ENCODE measurements at regions of chr1 and their contacts with region 1.

Region 1: GRCh38 chr1:32072622-32073298 is at the start of gene TMEM39B:
- DNase-seq: peak; percentile 89 to 98 (median 92)
- ATAC-seq: peak; percentile 84 to 86
- H3K4me3 Mint-ChIP-seq: peak within 1 kb of the TSS; percentile 87 to 99 (median 95)
- H3K27ac Mint-ChIP-seq: peak within 1 kb of the TSS; percentile 74 to 98 (median 94)
- H3K4me1 Mint-ChIP-seq: peaks cover 29 to 45% (median 34%) of the 10 kb centered on the region in 4 donors
- H3K27me3 Mint-ChIP-seq: no peaks in the 10 kb centered on the region
- polyA plus RNA-seq, gene TMEM39B: 2.4 to 4.8 (median 4.5) TPM

Region 2: DNA sequence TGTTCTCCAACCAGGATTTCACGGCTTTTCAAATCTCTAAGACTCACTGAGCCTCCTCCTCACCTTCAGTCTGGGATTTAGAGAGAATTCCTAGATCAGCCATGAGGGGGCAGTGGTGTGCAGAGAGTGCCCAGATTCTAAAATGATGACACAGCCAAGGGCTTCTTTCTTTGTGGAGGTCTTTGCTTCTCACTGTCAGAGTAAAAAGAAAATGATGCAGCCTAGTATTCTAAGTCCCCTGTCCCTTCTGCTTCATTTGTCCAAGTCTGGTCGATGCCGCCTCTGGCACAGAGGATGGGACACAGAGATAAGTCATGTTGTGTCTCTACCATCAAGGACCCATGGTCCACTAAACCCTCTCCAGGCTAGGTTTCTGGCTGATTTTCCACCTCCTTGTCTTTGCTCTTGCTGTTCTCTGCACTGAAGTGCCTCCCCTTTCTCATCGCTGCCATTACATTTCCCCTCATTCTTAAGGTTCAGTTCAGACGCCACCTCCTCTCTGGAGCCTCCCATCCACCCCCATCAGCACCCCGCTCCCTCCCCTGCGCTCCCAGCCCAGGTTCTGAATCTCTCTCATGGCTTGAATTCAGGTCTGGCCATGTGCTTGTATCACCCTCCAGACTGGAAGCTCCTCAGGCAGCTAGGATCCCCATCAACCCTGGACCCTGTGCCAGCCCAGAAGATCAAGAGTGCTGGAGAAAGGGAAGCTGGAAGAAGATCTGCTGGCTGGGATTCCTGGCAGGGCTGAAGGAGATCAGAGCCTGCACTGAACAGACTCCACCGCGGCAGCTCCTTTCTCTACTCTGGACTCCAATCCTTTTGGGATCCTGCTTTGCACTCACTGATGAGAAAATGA is 508.4 kb before region 1 on chr1:
- POLR2A ChIA-PET with region 1: no interaction called
- DNase-seq: peak in 7 of 10 donors; percentile 25 to 58 (median 48)
- ATAC-seq: peak; percentile 36 to 52
- H3K4me3 Mint-ChIP-seq: no peak overlapping the region
- H3K27ac Mint-ChIP-seq: no peak overlapping the region
- H3K4me1 Mint-ChIP-seq: no peaks in the 10 kb centered on the region
- H3K27me3 Mint-ChIP-seq: peaks cover 11 to 44% (median 14%) of the 10 kb centered on the region in 5 donors

Region 3: DNA sequence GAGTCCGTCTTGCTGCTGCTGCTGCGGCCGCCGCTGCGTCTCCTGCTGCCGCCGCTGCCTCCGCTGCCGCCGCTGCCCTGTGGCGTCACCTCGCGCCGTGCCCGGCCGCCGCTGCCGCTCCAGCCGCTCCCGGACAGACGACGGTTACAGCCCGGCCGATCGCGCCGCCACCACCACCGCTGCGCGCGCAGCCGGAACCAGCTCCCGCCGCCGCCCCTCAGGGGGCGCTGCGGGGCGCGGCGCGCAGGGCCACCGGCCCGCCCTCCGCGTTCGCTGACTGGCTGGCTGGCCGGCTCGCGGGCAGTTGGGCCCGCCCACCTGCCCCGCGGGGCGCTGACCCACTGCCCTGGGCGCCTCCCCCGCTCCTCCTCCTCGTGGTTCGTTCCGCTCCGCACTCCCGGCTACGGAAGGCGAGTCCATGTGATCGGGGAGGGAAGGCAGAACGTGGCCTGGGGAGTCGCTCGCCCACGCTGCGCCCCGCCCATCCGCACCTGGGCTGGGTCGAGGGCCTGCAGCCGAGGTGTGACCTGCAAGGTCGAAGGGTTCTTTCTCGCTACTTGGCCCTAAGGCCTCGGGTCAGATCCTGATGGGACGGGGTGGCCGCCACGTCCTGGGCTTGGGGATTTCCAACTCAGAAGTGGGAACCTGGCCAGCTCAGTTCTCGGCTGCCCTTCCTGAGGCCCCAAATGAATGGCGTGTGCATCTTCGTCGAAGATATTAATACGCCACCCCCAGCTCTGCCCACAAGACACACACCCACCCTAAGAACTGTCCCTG is 134.4 kb before region 1 on chr1 and contains the start of gene PTP4A2:
- POLR2A ChIA-PET with region 1: interaction called, 10 read pairs
- DNase-seq: peak; percentile 56 to 90 (median 82)
- ATAC-seq: peak; percentile 57 to 70
- H3K4me3 Mint-ChIP-seq: peak within 1 kb of the TSS; percentile 90 to 100 (median 96)
- H3K27ac Mint-ChIP-seq: peak within 1 kb of the TSS; percentile 94 to 99 (median 97)
- H3K4me1 Mint-ChIP-seq: peaks cover 31 to 84% (median 73%) of the 10 kb centered on the region in 4 donors
- H3K27me3 Mint-ChIP-seq: no peaks in the 10 kb centered on the region
- polyA plus RNA-seq, gene PTP4A2: 287 to 748 (median 546) TPM

Region 4: GRCh38 chr1:31944205-31945089 is 128.3 kb before region 1 on chr1:
- POLR2A ChIA-PET with region 1: interaction called, 10 read pairs
- DNase-seq: peak; percentile 64 to 92 (median 78)
- ATAC-seq: peak; percentile 67 to 79
- H3K4me3 Mint-ChIP-seq: peak overlapping the region; percentile 80 to 93 (median 86)
- H3K27ac Mint-ChIP-seq: peak overlapping the region; percentile 68 to 99 (median 96)
- H3K4me1 Mint-ChIP-seq: peaks cover 22 to 71% (median 54%) of the 10 kb centered on the region in 4 donors
- H3K27me3 Mint-ChIP-seq: no peaks in the 10 kb centered on the region

Region 5: DNA sequence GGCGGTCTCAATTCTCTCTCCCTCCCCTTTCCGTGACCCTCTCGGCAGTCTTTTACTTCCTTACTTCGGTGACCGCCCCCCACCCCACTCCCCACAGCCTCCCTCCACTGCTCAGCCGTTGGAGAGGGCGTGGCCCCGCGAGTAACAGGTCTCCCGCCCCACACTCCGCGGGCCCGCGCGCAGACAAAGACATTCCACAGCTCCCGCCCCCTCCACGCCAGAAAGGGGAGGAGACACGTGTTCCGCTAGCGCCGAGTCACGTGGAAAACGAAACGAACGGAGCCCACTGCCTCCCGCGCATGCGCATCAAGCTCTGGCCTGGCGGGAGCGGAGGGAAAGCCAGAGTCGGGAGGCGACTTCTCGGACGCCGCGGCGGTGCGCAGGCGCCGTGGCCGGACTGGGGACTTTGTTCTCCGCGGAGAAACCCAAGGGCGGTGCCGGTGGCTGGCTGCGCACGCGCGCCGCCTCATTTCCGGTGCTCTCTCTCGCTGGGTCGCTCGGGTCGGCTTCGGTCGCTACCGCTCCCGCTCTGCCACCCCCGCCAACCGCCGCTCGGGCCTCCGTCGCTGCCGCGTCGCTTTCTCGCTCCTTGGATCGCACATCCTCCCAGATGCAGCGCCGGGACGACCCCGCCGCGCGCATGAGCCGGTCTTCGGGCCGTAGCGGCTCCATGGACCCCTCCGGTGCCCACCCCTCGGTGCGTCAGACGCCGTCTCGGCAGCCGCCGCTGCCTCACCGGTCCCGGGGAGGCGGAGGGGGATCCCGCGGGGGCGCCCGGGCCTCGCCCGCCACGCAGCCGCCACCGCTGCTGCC is 59.2 kb before region 1 on chr1 and contains the start of gene KHDRBS1:
- POLR2A ChIA-PET with region 1: interaction called, 22 read pairs
- DNase-seq: peak; percentile 92 to 99 (median 97)
- ATAC-seq: peak; percentile 83 to 85
- H3K4me3 Mint-ChIP-seq: peak within 1 kb of the TSS; percentile 91 to 99 (median 97)
- H3K27ac Mint-ChIP-seq: peak within 1 kb of the TSS; percentile 94 to 100 (median 97)
- H3K4me1 Mint-ChIP-seq: peaks cover 19 to 41% (median 37%) of the 10 kb centered on the region in 4 donors
- H3K27me3 Mint-ChIP-seq: peaks cover 0 to 2% (median 0%) of the 10 kb centered on the region in 5 donors
- polyA plus RNA-seq, gene KHDRBS1: 92.1 to 115 (median 99.2) TPM

Region 6: DNA sequence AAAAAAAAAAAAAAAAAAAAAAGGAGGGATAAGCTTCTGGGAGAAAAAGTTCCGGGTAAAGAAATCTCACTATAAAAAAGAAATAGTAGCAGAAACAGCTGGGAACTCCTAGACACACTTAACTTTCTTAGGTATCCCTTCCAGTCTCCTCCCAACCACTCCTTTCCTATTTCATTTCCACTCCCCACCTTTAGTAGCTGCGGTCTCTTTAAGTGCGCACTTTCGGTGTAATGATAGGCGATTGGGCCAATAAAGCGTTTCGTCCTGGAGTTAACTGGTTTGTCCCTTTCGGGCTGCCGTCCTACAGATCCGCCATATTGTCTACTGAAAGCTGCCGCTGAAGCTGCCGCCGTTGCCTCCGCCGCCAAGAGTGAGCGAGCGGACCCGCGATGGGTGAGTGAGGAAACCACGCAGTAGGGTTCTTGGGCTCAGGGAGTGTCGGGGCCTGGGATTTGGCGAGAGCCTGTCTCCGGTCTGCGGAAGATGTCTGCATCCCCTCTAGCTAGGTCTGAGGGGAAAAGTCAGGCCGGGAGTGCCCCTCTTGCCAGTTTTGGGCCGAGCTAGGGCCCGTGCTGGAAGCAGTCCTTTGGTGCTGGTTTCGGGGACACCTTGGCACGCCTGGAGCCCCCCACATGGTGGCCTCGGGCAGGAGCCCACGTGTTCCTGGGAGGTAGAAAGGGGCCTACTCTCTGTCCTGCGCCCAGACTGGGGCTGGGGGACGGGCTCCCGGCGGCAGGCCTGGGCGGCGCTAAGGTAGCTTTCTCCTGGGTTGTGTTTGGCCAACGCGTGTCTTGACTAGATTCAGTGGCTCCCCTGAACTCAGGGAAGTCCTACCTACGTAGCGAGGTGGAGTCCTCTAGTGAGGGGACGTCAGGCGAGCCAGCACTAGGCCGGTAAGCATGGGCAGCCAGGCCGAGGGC is 35.2 kb after region 1 on chr1 and contains the start of gene KPNA6:
- POLR2A ChIA-PET with region 1: interaction called, 80 read pairs
- DNase-seq: peak; percentile 76 to 97 (median 92)
- ATAC-seq: peak; percentile 82 to 87
- H3K4me3 Mint-ChIP-seq: peak within 1 kb of the TSS; percentile 96 to 100 (median 100)
- H3K27ac Mint-ChIP-seq: peak within 1 kb of the TSS; percentile 95 to 99 (median 99)
- H3K4me1 Mint-ChIP-seq: peaks cover 14 to 53% (median 44%) of the 10 kb centered on the region in 4 donors
- H3K27me3 Mint-ChIP-seq: no peaks in the 10 kb centered on the region
- polyA plus RNA-seq, gene KPNA6: 26.5 to 31.9 (median 28.3) TPM

Region 7: DNA sequence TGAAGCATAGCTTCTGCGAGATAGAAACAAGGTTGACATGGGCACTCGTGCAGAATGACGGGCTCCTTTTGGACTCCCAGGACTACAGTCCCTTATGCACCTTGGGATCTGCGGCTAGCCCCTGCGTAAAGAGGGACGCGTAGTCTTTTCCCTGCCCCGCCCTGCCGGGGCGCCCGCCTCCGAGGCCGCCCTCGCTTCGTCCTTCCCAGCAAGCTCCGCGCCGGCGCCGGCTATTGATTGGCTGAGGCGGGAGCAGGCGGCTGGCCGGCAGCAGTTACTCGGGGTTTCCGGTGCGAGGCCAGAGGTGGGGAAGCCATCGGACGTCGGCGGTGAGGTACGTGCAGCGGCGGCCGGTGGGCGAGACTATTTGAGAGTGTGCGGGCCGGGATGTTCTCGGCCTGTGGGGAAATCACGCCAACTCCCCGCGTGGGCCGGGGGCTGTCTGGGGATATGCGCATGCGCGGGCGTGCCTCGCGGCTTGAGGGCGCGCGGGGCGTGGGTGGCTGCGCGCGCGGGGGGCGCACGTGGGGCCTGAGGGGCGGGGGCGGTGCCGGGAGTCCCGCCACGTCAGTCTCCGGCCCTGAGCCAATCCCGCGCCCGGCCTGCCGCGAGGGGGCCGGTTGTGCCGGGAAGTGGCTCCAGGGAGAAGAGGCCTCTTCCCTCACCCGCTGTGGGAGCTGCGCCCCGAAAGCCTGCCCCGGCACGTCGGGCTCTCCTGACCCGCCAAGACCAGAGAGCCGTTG is 106.9 kb after region 1 on chr1 and contains the start of gene TXLNA:
- POLR2A ChIA-PET with region 1: interaction called, 17 read pairs
- DNase-seq: peak; percentile 76 to 93 (median 88)
- ATAC-seq: peak; percentile 87 to 88
- H3K4me3 Mint-ChIP-seq: peak within 1 kb of the TSS; percentile 86 to 95 (median 91)
- H3K27ac Mint-ChIP-seq: peak within 1 kb of the TSS; percentile 85 to 98 (median 95)
- H3K4me1 Mint-ChIP-seq: peaks cover 27 to 49% (median 42%) of the 10 kb centered on the region in 4 donors
- H3K27me3 Mint-ChIP-seq: no peaks in the 10 kb centered on the region
- polyA plus RNA-seq, gene TXLNA: 19.0 to 28.3 (median 24.4) TPM

Region 8: GRCh38 chr1:32247983-32248889 is 175.5 kb after region 1 on chr1:
- POLR2A ChIA-PET with region 1: interaction called, 13 read pairs
- DNase-seq: peak; percentile 45 to 82 (median 62)
- ATAC-seq: peak in 1 of 2 donors; percentile 3
- H3K4me3 Mint-ChIP-seq: peak overlapping the region; percentile 63 to 100 (median 84)
- H3K27ac Mint-ChIP-seq: peak overlapping the region; percentile 94 to 99 (median 98)
- H3K4me1 Mint-ChIP-seq: peaks cover 29 to 72% (median 52%) of the 10 kb centered on the region in 4 donors
- H3K27me3 Mint-ChIP-seq: peaks cover 0 to 1% (median 0%) of the 10 kb centered on the region in 5 donors